Psoas muscle (tissue), 8 donors: ENCODE measurements at regions of chr1 and their contacts with region 1.

Region 1: GRCh38 chr1:234887016-234887900 is 241.4 kb downstream of the TOMM20 start:
- DNase-seq: peak; percentile 50 to 81
- ATAC-seq: peak; percentile 56 to 69 (median 66)
- H3K4me3 ChIP-seq: peak overlapping the region; percentile 41
- H3K27ac ChIP-seq: peak overlapping the region; percentile 97
- H3K4me1 ChIP-seq: peaks cover 30% of the 10 kb centered on the region
- H3K27me3 ChIP-seq: no peaks in the 10 kb centered on the region
- CTCF ChIP-seq: no peak

Region 2: GRCh38 chr1:234722904-234723720 is 164.1 kb before region 1 on chr1:
- intact Hi-C with region 1: no loop called
- DNase-seq: peak; percentile 78 to 82
- ATAC-seq: peak; percentile 27 to 50 (median 30)
- H3K4me3 ChIP-seq: peak overlapping the region; percentile 44
- H3K27ac ChIP-seq: peak overlapping the region; percentile 94
- H3K4me1 ChIP-seq: peaks cover 84% of the 10 kb centered on the region
- H3K27me3 ChIP-seq: no peaks in the 10 kb centered on the region
- CTCF ChIP-seq: no peak

Region 3: DNA sequence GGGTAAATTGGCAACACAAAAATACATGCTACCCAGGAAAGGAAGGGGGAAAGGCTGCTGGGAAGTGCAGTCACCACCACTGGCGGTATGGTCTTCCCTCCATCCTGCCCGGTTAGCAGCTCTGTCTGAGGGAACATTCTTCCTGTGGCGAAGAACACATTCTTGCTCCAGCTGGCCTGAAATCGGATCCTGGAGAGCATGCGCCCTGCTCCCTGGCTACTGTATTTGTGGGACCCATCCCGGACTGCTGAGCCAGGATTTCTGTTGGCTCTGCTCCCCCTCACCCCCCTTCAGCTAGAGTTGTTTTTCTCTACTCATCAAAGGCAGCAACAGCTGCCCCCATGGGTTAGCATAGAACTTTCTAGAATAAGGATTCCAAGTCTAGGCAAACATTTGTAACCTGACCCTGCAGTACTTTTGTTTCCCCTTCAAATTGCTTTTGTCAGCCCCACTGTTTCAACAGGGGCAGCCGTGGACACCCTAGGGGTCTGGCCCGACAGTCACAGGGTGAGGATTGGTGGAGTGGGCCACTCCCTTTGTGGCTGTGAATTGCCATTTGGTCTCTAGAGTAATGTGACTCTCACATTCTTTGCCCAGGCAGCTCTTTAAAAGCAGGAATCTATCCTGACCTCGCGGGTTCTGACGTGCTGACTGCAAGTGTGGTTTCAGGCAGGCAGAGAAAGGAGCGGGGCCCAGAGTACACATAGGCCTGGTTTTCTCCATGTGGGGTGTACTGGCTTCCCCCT is 83.6 kb after region 1 on chr1:
- intact Hi-C with region 1: loop called in 1 of 2 experiments (anchors 5 kb)
- DNase-seq: peak; percentile 86 to 93
- ATAC-seq: peak; percentile 83 to 92 (median 86)
- H3K4me3 ChIP-seq: peak overlapping the region; percentile 59
- H3K27ac ChIP-seq: peak overlapping the region; percentile 94
- H3K4me1 ChIP-seq: peaks cover 55% of the 10 kb centered on the region
- H3K27me3 ChIP-seq: no peaks in the 10 kb centered on the region
- CTCF ChIP-seq: no peak